Activated CD8-positive, alpha-beta T cell treated with anti-CD3 and anti-CD28 coated beads for 36 hours (primary cell): ENCODE measurements at regions of chr15 and their contacts with region 1.

Region 1: DNA sequence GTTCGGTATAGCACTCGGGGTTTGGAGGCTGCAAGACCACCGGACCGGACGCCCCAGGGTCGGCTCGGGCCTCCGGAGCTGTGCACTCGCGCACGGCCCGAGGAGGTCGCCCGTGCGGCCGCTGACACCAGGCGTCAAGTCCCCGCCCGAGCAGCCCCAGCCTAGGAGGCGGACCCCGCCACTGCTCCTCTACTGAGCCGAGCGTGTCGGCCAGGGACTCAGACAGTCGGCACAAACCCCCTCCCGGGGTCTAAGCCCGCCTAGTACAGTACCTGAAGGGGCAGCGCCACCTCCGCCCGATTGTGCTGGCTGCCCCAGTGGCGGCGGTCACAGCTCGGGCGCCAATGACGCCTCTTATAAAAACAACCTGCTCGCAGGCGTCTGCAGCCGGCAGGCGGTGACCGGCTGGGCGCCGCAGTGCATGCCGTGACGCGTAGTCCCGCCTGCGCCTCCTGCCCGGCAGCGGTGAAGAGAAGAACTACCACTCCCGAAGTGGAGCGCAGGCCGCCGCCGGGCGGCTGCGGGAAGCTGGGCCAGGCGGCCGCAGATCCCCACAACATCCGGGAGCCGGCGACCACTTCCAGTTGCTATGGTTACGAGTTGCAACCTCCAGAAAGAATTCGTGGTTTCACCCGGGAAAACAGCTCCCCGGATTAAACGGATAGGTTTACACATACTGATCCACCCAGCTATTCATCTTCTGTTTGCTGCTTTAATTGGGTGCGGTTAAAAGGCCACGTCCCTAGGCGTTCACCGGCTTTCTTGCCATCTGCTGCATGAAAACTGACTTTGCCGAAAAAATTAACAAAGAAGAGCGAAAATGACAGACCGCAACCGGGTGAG is at the starts of genes CCPG1 and PIERCE2:
- DNase-seq: peak; percentile 90
- ATAC-seq: peak; percentile 95
- H3K4me3 Mint-ChIP-seq: peak within 1 kb of the TSS; percentile 79
- H3K27ac Mint-ChIP-seq: peak within 1 kb of the TSS; percentile 77
- H3K4me1 Mint-ChIP-seq: peaks cover 26% of the 10 kb centered on the region
- H3K27me3 Mint-ChIP-seq: no peaks in the 10 kb centered on the region
- CTCF ChIP-seq: peak; percentile 93
- total RNA-seq, gene CCPG1: 11.0 to 11.1 TPM
- total RNA-seq, gene PIERCE2: not detected

Region 2: DNA sequence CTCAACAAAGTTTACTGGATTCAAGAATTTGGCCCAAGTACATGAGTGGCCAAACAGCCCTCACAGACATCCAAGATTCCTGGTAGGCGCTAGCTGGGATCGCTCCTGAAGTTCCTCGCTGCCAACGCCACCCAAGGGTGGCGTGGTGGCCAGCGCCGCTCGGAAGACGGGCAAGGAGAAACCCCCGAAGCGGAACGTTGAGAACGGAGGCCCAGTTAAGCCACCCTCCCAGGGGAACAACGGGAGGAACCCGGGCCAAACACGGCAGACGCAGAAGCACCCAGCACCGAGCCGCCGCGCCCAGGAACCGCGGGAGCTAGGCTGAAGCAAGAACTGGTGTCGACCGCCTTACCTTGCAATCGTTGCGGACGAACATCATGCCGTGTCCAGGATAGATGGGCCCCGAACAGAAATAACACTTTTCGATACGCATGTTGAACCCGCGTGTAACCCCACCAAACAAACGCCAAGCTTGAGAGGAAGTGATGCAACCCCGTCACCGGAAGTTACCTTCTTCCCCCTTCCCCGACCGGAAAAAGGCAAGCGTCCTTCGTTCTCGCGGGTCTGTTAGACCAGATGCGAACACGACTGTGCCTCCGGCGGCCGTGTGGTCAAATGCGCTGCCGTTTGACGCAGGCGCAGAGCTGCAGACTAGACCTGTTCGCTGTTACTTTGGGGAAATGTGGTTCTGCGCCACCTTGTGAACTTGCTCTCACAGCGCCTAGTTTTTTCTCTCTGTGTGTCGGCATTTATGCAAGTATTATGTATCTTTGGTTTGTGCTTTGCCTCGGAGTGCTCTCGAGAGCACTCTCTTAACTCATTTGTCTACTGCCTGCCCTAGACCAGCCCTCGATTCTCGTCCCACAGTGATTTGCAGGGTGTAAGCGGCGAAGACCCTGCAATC is 211.5 kb before region 1 on chr15 and contains the start of gene RSL24D1:
- CTCF ChIA-PET with region 1: interaction called, 3 read pairs
- POLR2A ChIA-PET with region 1: interaction called, 7 read pairs
- intact Hi-C with region 1: loop called (anchors 10 kb)
- DNase-seq: peak; percentile 98
- ATAC-seq: peak; percentile 99
- H3K4me3 Mint-ChIP-seq: no peak within 1 kb of the TSS
- H3K27ac Mint-ChIP-seq: no peak within 1 kb of the TSS
- H3K4me1 Mint-ChIP-seq: peaks cover 21% of the 10 kb centered on the region
- H3K27me3 Mint-ChIP-seq: no peaks in the 10 kb centered on the region
- CTCF ChIP-seq: peak; percentile 38
- total RNA-seq, gene RSL24D1: 183 to 194 TPM

Region 3: DNA sequence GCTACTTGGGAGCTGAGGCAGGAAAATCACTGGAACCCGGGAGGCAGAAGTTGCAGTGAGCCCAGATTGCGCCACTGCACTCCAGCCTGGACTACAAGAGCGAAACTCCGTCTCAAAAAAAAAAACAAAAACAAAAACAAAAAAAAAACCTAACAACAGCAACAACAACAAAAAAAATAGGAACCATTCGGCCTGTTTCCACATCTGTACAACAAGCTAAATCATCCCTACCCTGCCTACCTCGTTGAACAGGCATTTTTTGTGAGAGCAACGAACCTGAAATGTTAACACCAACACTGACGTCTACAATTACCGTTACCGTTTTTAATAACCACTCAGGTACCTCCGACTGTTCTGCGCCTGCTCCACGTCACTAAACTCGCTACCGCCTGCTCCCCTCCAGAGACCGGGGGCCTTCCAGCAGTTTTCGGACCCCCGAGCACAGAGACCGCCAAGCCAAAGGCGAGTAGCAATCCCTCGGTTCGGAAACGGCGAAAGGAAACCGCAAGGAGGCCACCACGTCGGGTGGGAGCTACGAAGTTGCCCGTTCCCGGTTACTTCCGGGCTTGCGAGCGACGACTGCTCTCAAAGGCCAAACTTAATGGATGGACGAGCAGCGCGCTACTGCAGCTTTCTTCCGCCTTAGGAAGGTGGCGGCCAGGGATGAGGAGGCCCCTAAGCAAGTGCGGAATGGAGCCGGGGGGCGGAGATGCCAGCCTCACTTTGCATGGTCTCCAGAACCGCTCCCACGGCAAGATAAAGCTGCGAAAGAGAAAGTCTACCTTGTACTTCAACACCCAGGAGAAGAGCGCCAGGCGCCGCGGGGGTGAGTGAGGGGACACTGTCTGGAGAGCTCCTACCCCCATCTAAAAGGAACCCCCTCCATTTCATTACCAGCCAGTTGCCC is 89.3 kb before region 1 on chr15 and contains the starts of genes PIGB and PIGBOS1:
- CTCF ChIA-PET with region 1: interaction called, 3 read pairs
- POLR2A ChIA-PET with region 1: interaction called, 14 read pairs
- intact Hi-C with region 1: no loop called
- DNase-seq: peak; percentile 88
- ATAC-seq: peak; percentile 94
- H3K4me3 Mint-ChIP-seq: peak within 1 kb of the TSS; percentile 91
- H3K27ac Mint-ChIP-seq: peak within 1 kb of the TSS; percentile 99
- H3K4me1 Mint-ChIP-seq: peaks cover 53% of the 10 kb centered on the region
- H3K27me3 Mint-ChIP-seq: no peaks in the 10 kb centered on the region
- CTCF ChIP-seq: no peak
- total RNA-seq, gene PIGB: 14.0 to 17.5 TPM
- total RNA-seq, gene PIGBOS1: 10.5 to 13.2 TPM

Region 4: DNA sequence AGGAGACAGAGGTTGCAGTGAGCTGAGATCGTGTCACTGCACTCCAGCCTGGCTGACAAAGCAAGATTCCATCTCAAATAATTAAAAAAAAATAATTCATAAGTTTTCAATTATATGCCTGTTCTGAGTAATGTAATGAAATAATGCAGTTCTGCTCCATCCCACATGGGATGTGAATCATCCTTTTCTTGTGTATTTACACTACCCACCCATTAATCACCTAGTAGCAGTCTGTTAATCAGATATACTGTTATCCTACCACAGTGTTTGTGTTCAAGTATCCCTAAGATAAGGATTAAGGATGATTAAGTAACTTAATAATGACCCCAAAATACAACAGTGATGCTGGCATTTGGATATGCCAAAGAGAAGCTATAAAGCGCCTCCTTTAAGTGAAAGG is 50.4 kb before region 1 on chr15:
- CTCF ChIA-PET with region 1: interaction called, 10 read pairs
- POLR2A ChIA-PET with region 1: interaction called, 3 read pairs
- intact Hi-C with region 1: no loop called
- DNase-seq: no peak
- ATAC-seq: no peak
- H3K4me3 Mint-ChIP-seq: no peak overlapping the region
- H3K27ac Mint-ChIP-seq: no peak overlapping the region
- H3K4me1 Mint-ChIP-seq: no peaks in the 10 kb centered on the region
- H3K27me3 Mint-ChIP-seq: no peaks in the 10 kb centered on the region
- CTCF ChIP-seq: no peak

Region 5: DNA sequence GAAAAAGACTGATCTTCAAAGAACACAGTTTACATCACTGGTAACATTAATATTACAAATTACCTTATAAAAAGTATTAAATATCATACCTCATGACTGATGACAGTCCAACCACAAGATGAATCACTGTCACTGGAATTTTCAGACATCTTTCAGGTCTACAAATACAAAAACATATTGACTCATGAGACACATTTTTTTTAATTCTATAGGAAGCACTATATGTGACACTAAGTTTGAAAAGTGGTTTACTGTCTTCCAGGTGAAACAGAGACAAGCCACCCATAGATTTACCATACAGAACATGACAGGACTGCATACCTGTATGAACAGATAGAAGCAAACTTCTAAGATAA is 18.9 kb before region 1 on chr15:
- CTCF ChIA-PET with region 1: interaction called, 12 read pairs
- POLR2A ChIA-PET with region 1: no interaction called
- intact Hi-C with region 1: no loop called
- DNase-seq: no peak
- ATAC-seq: no peak
- H3K4me3 Mint-ChIP-seq: no peak overlapping the region
- H3K27ac Mint-ChIP-seq: no peak overlapping the region
- H3K4me1 Mint-ChIP-seq: peaks cover 10% of the 10 kb centered on the region
- H3K27me3 Mint-ChIP-seq: no peaks in the 10 kb centered on the region
- CTCF ChIP-seq: no peak

Region 6: GRCh38 chr15:55468321-55468720 is 60.2 kb after region 1 on chr15:
- CTCF ChIA-PET with region 1: no interaction called
- POLR2A ChIA-PET with region 1: no interaction called
- intact Hi-C with region 1: no loop called
- DNase-seq: no peak
- ATAC-seq: no peak
- H3K4me3 Mint-ChIP-seq: no peak overlapping the region
- H3K27ac Mint-ChIP-seq: no peak overlapping the region
- H3K4me1 Mint-ChIP-seq: no peaks in the 10 kb centered on the region
- H3K27me3 Mint-ChIP-seq: no peaks in the 10 kb centered on the region
- CTCF ChIP-seq: no peak

Region 7: DNA sequence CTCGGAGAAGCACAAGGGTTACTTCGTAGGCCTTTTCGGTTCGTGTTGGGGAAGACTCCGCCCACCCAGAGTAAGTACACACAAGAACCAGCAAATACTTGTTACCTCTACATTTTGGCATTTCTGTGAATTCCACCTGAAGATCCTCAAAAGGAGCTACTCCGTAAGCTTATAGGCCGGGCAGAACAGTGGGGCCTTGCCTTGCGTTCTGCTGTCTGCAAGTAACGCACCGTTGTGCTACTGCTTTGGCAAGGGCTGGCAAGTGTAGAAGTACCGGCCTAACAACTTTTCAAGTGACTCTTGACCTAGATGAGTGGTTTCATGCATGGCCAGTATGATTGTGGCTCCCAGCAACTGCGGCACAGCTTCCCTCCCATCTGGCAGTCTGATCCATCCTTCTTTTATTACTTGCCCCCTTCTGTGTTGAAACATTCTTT is 106.3 kb after region 1 on chr15:
- CTCF ChIA-PET with region 1: no interaction called
- POLR2A ChIA-PET with region 1: no interaction called
- intact Hi-C with region 1: no loop called
- DNase-seq: no peak
- ATAC-seq: no peak
- H3K4me3 Mint-ChIP-seq: no peak overlapping the region
- H3K27ac Mint-ChIP-seq: no peak overlapping the region
- H3K4me1 Mint-ChIP-seq: peaks cover 2% of the 10 kb centered on the region
- H3K27me3 Mint-ChIP-seq: no peaks in the 10 kb centered on the region
- CTCF ChIP-seq: no peak